HepG2 (cell line): ENCODE measurements at regions of chrX and their contacts with region 1.

Region 1: DNA sequence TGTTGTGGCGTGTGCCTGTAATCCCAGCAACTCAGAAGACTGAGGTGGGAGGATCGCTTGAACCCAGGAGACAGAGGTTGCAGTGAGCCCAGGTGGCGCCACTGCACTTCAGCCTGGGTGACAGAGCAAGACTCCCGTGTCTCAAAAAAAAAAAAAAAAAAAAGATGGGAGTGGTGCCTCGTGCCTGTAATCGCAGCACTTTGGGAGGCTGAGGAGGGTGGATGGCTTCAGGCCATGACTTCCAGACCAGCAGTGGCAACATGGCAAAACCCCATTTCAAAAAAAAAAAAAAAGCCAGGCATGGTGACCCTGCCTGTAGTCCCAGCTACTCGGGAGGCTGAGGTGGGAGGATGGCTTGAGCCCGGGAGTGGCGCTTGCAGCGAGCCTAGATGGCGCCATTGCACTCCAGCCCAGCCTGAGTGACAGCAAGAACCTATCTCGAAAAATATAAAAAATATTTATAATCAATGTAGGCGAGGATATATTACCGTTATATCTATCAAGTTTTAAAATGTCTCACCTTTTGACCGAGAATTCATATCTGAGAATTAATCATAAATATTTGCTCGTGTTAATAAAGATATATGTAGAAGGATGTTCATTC is 27.0 kb downstream of the EIF2S3 start:
- DNase-seq: peak; percentile 44
- ATAC-seq: peak; percentile 87
- H3K4me3 ChIP-seq: no peak overlapping the region
- H3K27ac ChIP-seq: no peak overlapping the region
- H3K4me1 ChIP-seq: no peaks in the 10 kb centered on the region
- H3K27me3 ChIP-seq: no peaks in the 10 kb centered on the region
- CTCF ChIP-seq: peak; percentile 62
- EP300 ChIP-seq: no peak
- POLR2A ChIP-seq: no peak
- RAD21 ChIP-seq: no peak

Region 2: DNA sequence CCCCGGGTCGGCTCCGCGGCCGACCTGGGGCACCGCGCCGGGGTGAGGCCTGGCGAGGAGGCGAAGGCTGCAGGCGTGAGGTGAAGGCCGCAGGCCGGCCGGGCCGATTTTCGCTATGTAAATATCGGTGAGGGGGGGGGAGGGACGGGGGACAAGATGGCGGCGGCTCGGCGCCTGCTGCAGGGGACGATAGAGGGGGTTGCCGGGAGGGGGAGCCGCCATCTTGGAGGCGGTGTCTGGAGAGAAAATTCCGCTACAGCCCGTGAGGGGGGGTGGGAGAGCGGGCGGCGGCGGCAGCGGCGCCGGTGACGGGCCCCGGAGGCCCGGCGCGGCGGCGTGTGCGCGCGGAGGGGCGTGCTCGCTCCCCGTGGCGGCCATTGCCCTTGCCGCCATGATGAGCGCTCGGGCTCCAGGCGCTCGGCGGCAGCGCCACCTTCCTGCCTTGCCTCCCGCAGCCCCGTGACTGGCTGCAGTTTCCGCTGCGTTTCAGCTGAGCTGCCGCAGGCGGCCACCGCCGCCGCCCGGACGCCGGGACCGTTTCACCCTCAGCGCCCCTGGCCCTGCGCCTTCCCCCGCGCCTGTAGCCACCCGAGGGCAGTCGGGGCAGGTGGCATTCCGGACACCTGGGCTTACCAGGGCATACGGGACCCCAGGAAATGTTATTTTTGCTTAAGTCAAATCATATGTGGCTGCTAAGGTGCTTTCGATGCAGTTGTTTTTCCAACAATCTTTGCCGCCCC is 68.5 kb after region 1 on chrX:
- CTCF ChIA-PET with region 1: no interaction called
- POLR2A ChIA-PET with region 1: no interaction called
- in situ Hi-C with region 1: no loop called
- intact Hi-C with region 1: loop called (anchors 5 kb)
- DNase-seq: peak; percentile 67
- ATAC-seq: peak; percentile 84
- H3K4me3 ChIP-seq: peak overlapping the region; percentile 74 to 79 (median 74)
- H3K27ac ChIP-seq: peak overlapping the region; percentile 95
- H3K4me1 ChIP-seq: peaks cover 61% of the 10 kb centered on the region
- H3K27me3 ChIP-seq: no peaks in the 10 kb centered on the region
- CTCF ChIP-seq: peak; percentile 66
- EP300 ChIP-seq: no peak
- POLR2A ChIP-seq: peak in 1 of 2 experiments; percentile 58; a peak in 3 of 4 replicates
- RAD21 ChIP-seq: peak; percentile 71